MCF 10A (cell line): ENCODE measurements at regions of chr1 and their contacts with region 1.

Region 1: GRCh38 chr1:196558424-196558823 is 49.8 kb downstream of the KCNT2 start:
- DNase-seq: peak; percentile 90
- H3K4me3 Mint-ChIP-seq: peak overlapping the region; percentile 77
- H3K27ac Mint-ChIP-seq: peak overlapping the region; percentile 37
- H3K4me1 Mint-ChIP-seq: no peaks in the 10 kb centered on the region
- H3K27me3 Mint-ChIP-seq: no peaks in the 10 kb centered on the region
- CTCF ChIP-seq: no peak

Region 2: DNA sequence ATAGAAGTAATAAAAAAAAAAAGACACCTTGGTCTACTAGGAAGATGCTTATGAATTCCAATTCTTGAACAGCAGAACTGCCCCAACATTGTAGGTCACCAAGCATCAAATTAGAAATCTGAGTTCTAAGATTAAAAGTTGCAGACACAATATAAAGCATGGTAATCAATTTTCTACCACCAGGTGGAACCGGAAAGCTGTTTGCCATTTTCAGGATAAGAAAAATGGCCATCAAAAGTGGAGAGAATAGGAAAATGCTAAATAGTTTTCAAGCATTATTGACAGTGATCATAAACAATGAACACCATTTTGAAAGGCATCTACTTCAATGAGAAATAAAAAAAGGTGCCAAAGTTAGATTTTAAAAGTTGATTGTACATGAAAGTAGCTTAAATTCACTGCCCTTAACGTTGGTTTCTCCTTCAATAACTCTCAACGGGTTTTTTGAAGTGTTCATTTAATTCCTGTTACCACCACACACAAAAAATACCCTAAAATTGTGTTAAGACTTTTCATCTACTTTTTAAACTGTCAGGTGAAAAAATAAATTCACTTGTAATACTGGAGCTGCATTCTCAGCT is 203.1 kb before region 1 on chr1:
- CTCF ChIA-PET with region 1: interaction called, 3 read pairs
- POLR2A ChIA-PET with region 1: no interaction called
- intact Hi-C with region 1: loop called (anchors 5 kb)
- DNase-seq: peak; percentile 62
- H3K4me3 Mint-ChIP-seq: no peak overlapping the region
- H3K27ac Mint-ChIP-seq: no peak overlapping the region
- H3K4me1 Mint-ChIP-seq: no peaks in the 10 kb centered on the region
- H3K27me3 Mint-ChIP-seq: no peaks in the 10 kb centered on the region
- CTCF ChIP-seq: peak; percentile 79

Region 3: GRCh38 chr1:196393742-196394141 is 164.7 kb before region 1 on chr1:
- CTCF ChIA-PET with region 1: no interaction called
- POLR2A ChIA-PET with region 1: no interaction called
- intact Hi-C with region 1: no loop called
- DNase-seq: peak; percentile 90
- H3K4me3 Mint-ChIP-seq: peak overlapping the region; percentile 18
- H3K27ac Mint-ChIP-seq: peak overlapping the region; percentile 53
- H3K4me1 Mint-ChIP-seq: peaks cover 16% of the 10 kb centered on the region
- H3K27me3 Mint-ChIP-seq: no peaks in the 10 kb centered on the region
- CTCF ChIP-seq: no peak

Region 4: GRCh38 chr1:196546272-196547245 is 11.9 kb before region 1 on chr1:
- CTCF ChIA-PET with region 1: no interaction called
- POLR2A ChIA-PET with region 1: interaction called, 11 read pairs
- intact Hi-C with region 1: no loop called
- DNase-seq: peak; percentile 94
- H3K4me3 Mint-ChIP-seq: peak overlapping the region; percentile 28
- H3K27ac Mint-ChIP-seq: peak overlapping the region; percentile 84
- H3K4me1 Mint-ChIP-seq: peaks cover 14% of the 10 kb centered on the region
- H3K27me3 Mint-ChIP-seq: no peaks in the 10 kb centered on the region
- CTCF ChIP-seq: no peak

Region 5: GRCh38 chr1:196651637-196652215 is 93.3 kb after region 1 on chr1 and contains the start of gene CFH:
- CTCF ChIA-PET with region 1: interaction called, 3 read pairs
- POLR2A ChIA-PET with region 1: interaction called, 3 read pairs
- intact Hi-C with region 1: loop called (anchors 5 kb)
- DNase-seq: peak; percentile 78
- H3K4me3 Mint-ChIP-seq: peak within 1 kb of the TSS; percentile 79
- H3K27ac Mint-ChIP-seq: peak within 1 kb of the TSS; percentile 95
- H3K4me1 Mint-ChIP-seq: peaks cover 26% of the 10 kb centered on the region
- H3K27me3 Mint-ChIP-seq: no peaks in the 10 kb centered on the region
- CTCF ChIP-seq: no peak
- total RNA-seq, gene CFH: 21.3 and 31.6 TPM in 2 replicates